Naive thymus-derived CD4-positive, alpha-beta T cell (primary cell): ENCODE measurements at regions of chr1 and their contacts with region 1.

Region 1: GRCh38 chr1:92916902-92917301 is 44.4 kb downstream of the DIPK1A start:
- DNase-seq: no peak
- ATAC-seq: no peak
- H3K4me3 ChIP-seq: no peak overlapping the region
- H3K4me3 Mint-ChIP-seq: no peak overlapping the region
- H3K27ac ChIP-seq: no peak overlapping the region
- H3K27ac Mint-ChIP-seq: peak overlapping the region in 1 of 9 donors; percentile 21
- H3K4me1 ChIP-seq: no peaks in the 10 kb centered on the region
- H3K4me1 Mint-ChIP-seq: peaks cover 0 to 67% (median 53%) of the 10 kb centered on the region in 7 donors
- H3K27me3 ChIP-seq: no peaks in the 10 kb centered on the region
- H3K27me3 Mint-ChIP-seq: no peaks in the 10 kb centered on the region

Region 2: GRCh38 chr1:92901699-92902405 is 15.1 kb before region 1 on chr1:
- CTCF ChIA-PET with region 1: no interaction called
- POLR2A ChIA-PET with region 1: interaction called, 4 read pairs
- intact Hi-C with region 1: loop called in 1 of 2 experiments (anchors 2 kb)
- DNase-seq: no peak
- ATAC-seq: no peak
- H3K4me3 ChIP-seq: no peak overlapping the region
- H3K4me3 Mint-ChIP-seq: no peak overlapping the region
- H3K27ac ChIP-seq: no peak overlapping the region
- H3K27ac Mint-ChIP-seq: peak overlapping the region in 2 of 9 donors; percentile 28 to 65
- H3K4me1 ChIP-seq: no peaks in the 10 kb centered on the region
- H3K4me1 Mint-ChIP-seq: peaks cover 13 to 38% (median 32%) of the 10 kb centered on the region in 7 donors
- H3K27me3 ChIP-seq: no peaks in the 10 kb centered on the region
- H3K27me3 Mint-ChIP-seq: no peaks in the 10 kb centered on the region

Region 3: GRCh38 chr1:92931681-92932080 is 14.8 kb after region 1 on chr1:
- CTCF ChIA-PET with region 1: no interaction called
- POLR2A ChIA-PET with region 1: no interaction called
- intact Hi-C with region 1: loop called in 1 of 2 experiments (anchors 2 kb)
- DNase-seq: no peak
- ATAC-seq: no peak
- H3K4me3 ChIP-seq: no peak overlapping the region
- H3K4me3 Mint-ChIP-seq: no peak overlapping the region
- H3K27ac ChIP-seq: no peak overlapping the region
- H3K27ac Mint-ChIP-seq: peak overlapping the region in 1 of 9 donors; percentile 41
- H3K4me1 ChIP-seq: peaks cover 4 to 21% of the 10 kb centered on the region in 2 donors
- H3K4me1 Mint-ChIP-seq: peaks cover 27 to 85% (median 76%) of the 10 kb centered on the region in 7 donors
- H3K27me3 ChIP-seq: no peaks in the 10 kb centered on the region
- H3K27me3 Mint-ChIP-seq: no peaks in the 10 kb centered on the region